Activated CD4-positive, alpha-beta memory T cell treated with anti-CD3 and anti-CD28 coated beads for 36 hours (primary cell): ENCODE measurements at regions of chr6 and their contacts with region 1.

Region 1: DNA sequence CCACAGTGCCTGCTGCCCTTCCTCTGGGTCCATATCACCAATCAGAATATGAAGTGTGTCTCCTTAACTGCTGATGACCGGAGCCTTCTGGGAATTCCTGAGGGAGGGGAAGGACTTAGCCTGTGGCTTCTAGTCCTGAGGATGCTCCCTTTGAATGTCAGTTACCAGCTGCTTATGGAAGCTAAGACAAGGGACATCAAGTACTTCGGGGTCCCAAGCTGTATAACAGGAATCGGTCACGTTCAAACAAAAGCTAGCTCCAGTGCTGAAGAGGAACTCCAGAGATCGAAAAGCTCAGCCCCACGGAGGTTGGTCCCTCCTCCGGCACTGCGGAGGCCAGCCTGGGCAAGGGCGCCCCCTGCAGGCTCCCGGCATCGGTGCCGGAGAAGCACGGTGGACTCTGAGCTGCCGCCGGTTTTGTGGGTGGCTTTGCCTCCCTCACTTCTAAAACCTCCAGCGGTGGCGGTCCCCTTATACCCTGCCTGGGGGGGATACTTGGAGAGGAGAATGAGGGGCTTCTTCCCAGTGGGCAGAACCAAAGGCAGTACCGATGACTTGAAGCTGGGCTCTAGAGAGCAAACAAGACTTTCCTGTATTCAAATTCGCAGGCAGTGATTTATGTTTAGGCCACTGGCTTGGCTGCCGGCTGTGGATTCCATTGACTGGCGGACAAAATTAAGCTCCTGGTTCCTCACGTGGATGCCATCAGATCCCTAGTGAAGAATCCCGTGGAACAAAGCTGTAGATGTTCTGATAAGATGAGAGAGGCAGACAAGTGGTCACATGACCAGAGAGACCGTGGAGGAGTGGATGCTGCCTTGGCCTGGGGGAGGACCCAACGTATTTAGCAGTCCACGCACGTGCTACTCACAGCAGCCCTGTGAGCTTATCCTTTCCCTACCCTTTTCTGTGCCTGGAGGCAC is 16.2 kb upstream of the UBR2 start:
- DNase-seq: peak; percentile 92
- H3K4me3 Mint-ChIP-seq: peak overlapping the region; percentile 62
- H3K27ac Mint-ChIP-seq: no peak overlapping the region
- H3K4me1 Mint-ChIP-seq: peaks cover 23% of the 10 kb centered on the region
- H3K27me3 Mint-ChIP-seq: peaks cover 4% of the 10 kb centered on the region

Region 2: DNA sequence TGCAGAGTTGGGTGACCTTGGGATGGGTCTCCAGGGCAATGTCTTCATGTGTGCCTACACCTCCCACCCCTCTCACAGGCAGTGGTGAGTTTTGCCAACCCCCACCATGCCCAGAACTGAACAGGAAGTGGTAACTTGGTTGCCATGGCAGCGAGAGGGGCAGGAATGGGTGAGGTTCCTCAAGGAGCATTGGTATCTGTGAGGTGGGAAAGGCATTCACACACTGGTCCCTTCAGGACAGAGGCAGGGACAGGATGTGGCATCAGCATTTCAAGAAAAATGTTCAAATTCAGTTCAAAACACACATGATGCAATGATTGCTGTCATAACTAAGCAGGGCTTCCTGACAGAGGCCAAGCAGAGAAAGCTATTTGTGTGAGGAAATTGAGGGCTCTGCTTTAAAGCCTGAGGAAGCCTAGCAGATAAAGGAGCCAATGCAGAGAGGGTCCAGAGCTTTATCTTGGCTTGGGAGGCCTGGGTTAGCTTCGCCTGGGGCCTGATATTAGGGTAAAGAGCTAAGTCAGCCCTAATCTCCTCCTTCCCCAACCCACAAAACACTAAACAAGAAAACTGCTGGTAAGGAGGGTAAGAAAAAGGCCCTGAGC is 1347.3 kb before region 1 on chr6:
- CTCF ChIA-PET with region 1: no interaction called
- POLR2A ChIA-PET with region 1: no interaction called
- intact Hi-C with region 1: no loop called
- DNase-seq: peak; percentile 78
- H3K4me3 Mint-ChIP-seq: peak overlapping the region; percentile 69
- H3K27ac Mint-ChIP-seq: peak overlapping the region; percentile 95
- H3K4me1 Mint-ChIP-seq: peaks cover 47% of the 10 kb centered on the region
- H3K27me3 Mint-ChIP-seq: no peaks in the 10 kb centered on the region

Region 3: GRCh38 chr6:42224222-42224989 is 323.3 kb before region 1 on chr6:
- CTCF ChIA-PET with region 1: interaction called, 10 read pairs
- POLR2A ChIA-PET with region 1: no interaction called
- intact Hi-C with region 1: loop called (anchors 5 kb)
- DNase-seq: peak; percentile 33
- H3K4me3 Mint-ChIP-seq: peak overlapping the region; percentile 54
- H3K27ac Mint-ChIP-seq: peak overlapping the region; percentile 80
- H3K4me1 Mint-ChIP-seq: peaks cover 21% of the 10 kb centered on the region
- H3K27me3 Mint-ChIP-seq: no peaks in the 10 kb centered on the region

Region 4: DNA sequence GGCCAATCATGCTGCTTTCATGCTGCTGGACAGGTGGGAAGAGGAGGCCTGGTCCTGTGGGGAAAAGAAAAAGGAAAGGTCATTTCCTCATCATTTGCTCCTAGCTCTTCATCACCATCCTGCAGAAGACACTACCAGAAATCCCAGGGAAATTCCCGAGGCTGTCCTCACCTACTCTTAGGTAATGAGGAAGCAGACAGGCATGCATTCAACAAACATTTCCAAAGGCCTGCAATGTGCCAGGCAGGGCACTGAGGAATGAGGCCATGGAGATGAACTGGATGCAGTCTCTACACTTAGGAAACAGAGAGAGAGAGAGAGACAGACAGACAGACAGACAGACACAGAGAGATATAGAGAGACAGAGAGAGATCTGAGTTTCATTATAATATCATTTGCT is 247.0 kb before region 1 on chr6:
- CTCF ChIA-PET with region 1: interaction called, 46 read pairs
- POLR2A ChIA-PET with region 1: no interaction called
- intact Hi-C with region 1: no loop called
- DNase-seq: no peak
- H3K4me3 Mint-ChIP-seq: no peak overlapping the region
- H3K27ac Mint-ChIP-seq: no peak overlapping the region
- H3K4me1 Mint-ChIP-seq: peaks cover 21% of the 10 kb centered on the region
- H3K27me3 Mint-ChIP-seq: no peaks in the 10 kb centered on the region

Region 5: DNA sequence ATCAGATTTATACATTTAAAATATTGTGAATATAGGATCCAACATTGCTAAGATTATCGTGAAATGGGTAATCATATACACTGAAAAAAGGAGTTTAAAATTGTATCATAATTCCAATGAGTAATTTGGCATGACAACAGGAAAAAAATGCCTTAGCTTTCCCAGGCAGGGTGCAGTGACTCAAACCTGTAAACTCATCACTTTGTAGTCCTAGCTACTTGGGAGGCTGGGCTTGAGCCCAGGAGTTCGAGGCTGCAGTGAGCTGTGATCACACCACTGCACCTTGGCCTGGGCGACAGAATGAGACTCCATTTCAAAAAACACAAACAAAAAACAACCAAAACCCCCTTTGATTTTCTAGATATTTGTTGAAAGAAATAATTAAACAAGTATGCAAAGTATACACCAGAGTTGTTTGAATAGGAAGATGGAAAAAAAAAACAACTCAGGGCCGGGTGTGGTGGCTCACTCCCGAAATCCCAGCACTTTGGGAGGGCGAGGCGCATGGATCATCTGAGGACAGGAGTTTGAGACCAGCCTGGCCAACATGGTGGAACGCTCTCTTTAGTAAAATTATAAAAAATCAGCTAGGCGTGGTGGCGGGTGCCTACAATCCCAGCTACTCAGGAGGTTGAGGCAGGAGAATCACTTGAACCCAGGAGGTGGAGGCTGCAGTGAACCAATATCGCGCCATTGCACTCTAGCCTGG is 194.7 kb before region 1 on chr6:
- CTCF ChIA-PET with region 1: interaction called, 11 read pairs
- POLR2A ChIA-PET with region 1: no interaction called
- intact Hi-C with region 1: no loop called
- DNase-seq: no peak
- H3K4me3 Mint-ChIP-seq: no peak overlapping the region
- H3K27ac Mint-ChIP-seq: no peak overlapping the region
- H3K4me1 Mint-ChIP-seq: peaks cover 18% of the 10 kb centered on the region
- H3K27me3 Mint-ChIP-seq: no peaks in the 10 kb centered on the region

Region 6: GRCh38 chr6:42417641-42418112 is 130.0 kb before region 1 on chr6:
- CTCF ChIA-PET with region 1: interaction called, 14 read pairs
- POLR2A ChIA-PET with region 1: no interaction called
- intact Hi-C with region 1: no loop called
- DNase-seq: peak; percentile 76
- H3K4me3 Mint-ChIP-seq: no peak overlapping the region
- H3K27ac Mint-ChIP-seq: peak overlapping the region; percentile 50
- H3K4me1 Mint-ChIP-seq: peaks cover 59% of the 10 kb centered on the region
- H3K27me3 Mint-ChIP-seq: no peaks in the 10 kb centered on the region

Region 7: DNA sequence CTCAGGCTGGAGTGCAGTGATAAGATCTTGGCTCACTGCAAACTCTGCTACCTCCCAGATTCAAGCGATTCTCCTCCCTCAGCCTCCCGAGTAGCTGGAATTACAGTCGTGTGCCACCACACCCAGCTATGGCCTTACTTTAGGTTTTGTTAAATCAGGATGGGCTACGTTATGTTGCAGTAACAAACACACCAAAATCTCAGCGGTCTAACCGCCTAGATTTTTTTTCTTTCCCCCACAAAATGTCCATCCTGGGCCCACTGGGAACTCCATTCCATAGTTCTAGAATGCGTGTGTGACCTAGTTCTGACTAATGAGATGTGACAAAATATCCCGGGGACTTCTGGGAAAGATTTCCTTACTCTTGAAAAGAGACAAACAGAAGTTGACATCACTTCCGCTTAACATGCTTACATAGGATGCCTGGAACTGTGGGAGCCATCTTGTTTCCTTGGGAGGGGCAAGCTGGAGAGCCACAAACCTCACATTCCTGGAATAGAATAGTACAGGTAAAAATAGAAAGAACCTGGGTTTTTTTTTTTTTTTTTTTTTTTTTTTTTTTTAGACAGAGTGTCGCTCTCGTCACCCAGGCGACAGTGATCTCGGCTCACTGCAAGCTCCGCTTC is 53.6 kb before region 1 on chr6:
- CTCF ChIA-PET with region 1: interaction called, 13 read pairs
- POLR2A ChIA-PET with region 1: no interaction called
- intact Hi-C with region 1: no loop called
- DNase-seq: no peak
- H3K4me3 Mint-ChIP-seq: no peak overlapping the region
- H3K27ac Mint-ChIP-seq: no peak overlapping the region
- H3K4me1 Mint-ChIP-seq: no peaks in the 10 kb centered on the region
- H3K27me3 Mint-ChIP-seq: no peaks in the 10 kb centered on the region

Region 8: DNA sequence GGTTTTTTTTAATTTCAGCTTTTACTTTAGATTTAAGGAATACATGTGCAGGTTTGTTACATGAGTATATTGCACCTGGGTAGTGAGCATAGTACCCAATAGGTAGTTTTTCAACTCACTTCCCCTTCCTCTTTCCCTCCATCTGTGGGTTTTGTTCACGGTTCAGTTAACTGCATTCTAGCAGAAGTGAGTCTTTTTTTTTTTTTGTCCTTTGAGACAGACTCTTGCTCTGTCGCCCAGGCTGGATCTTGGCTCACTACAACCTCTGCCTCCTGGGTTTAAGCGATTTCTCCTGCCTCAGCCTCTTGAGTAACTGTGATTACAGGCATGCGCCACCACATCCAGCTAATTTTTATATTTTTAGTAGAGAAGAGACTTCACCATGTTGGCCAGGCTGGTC is 24.9 kb after region 1 on chr6:
- CTCF ChIA-PET with region 1: interaction called, 13 read pairs
- POLR2A ChIA-PET with region 1: no interaction called
- intact Hi-C with region 1: no loop called
- DNase-seq: no peak
- H3K4me3 Mint-ChIP-seq: no peak overlapping the region
- H3K27ac Mint-ChIP-seq: no peak overlapping the region
- H3K4me1 Mint-ChIP-seq: peaks cover 50% of the 10 kb centered on the region
- H3K27me3 Mint-ChIP-seq: no peaks in the 10 kb centered on the region